ENCODE measurements at regions of chr11 and their contacts with region 1.

Region 1: GRCh38 chr11:66466225-66467027 is at the start of gene PELI3:
- DNase-seq: peak; percentile 78
- H3K4me3 ChIP-seq: peak within 1 kb of the TSS; percentile 71 to 75 (median 73)
- H3K27ac ChIP-seq: no peak within 1 kb of the TSS
- H3K4me1 ChIP-seq: peaks cover 13% of the 10 kb centered on the region
- H3K27me3 ChIP-seq: no peaks in the 10 kb centered on the region
- CTCF ChIP-seq: no peak
- total RNA-seq, gene PELI3: 8.4 to 9.7 TPM

Region 2: GRCh38 chr11:66371627-66372415 is 94.6 kb before region 1 on chr11 and contains the start of gene SLC29A2:
- CTCF ChIA-PET with region 1: no interaction called
- dilution Hi-C with region 1: no loop called
- in situ Hi-C with region 1: no loop called
- intact Hi-C with region 1: no loop called
- DNase-seq: peak; percentile 73
- H3K4me3 ChIP-seq: peak within 1 kb of the TSS; percentile 59 to 75 (median 70)
- H3K27ac ChIP-seq: no peak within 1 kb of the TSS
- H3K4me1 ChIP-seq: peaks cover 10% of the 10 kb centered on the region
- H3K27me3 ChIP-seq: no peaks in the 10 kb centered on the region
- CTCF ChIP-seq: no peak
- total RNA-seq, gene SLC29A2: 3.2 to 5.9 TPM

Region 3: DNA sequence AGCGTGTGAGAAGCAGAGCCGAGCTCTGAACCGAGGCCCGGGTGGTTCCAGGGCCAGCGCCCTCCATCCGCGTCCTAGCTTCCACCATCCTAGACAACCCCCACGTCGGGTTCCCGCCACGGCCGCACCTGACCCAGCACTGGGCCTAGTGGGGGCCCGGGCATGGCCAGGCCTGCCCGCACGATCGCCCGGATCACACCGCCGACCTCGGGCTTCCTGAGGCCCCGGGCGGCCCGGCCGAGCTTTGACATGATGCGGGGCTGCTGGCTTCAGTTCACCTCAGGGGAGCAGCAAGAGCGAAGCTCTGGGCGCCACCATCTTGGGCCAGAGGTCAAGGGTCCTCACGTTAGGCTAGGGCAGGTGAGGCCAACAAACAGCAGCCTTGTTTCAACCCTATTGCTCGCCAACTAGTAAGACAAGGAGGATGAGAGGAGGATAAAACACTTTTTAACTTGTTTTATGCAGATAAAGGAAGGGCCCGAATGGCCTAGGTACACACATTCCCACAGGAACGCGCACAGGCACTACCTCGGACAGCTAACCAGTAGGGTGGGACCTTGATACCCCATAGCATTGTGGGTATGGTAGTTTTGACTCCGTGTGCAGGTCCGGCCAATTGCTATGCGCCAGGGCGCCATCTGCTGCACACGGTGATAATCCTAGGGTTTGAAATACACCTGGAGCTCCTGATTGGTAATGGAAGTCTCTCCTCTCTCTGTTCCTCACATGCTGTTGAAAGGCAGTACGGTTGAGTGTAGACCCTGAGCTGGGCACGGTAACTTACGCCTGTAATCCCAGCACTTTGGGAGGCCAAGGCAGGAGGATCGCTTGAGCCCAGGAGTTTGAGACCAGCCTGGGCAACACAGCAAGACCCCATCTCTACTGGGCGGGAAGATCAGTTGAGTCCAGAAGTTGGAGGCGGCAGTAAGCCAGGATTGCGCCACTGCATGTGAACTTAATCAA is 27.6 kb before region 1 on chr11 and contains the start of gene MRPL11:
- CTCF ChIA-PET with region 1: interaction called, 10 read pairs
- dilution Hi-C with region 1: no loop called
- in situ Hi-C with region 1: no loop called
- intact Hi-C with region 1: loop called (anchors 2 kb)
- DNase-seq: peak; percentile 90
- H3K4me3 ChIP-seq: peak within 1 kb of the TSS; percentile 53 to 87 (median 80)
- H3K27ac ChIP-seq: peak within 1 kb of the TSS; percentile 64
- H3K4me1 ChIP-seq: peaks cover 7% of the 10 kb centered on the region
- H3K27me3 ChIP-seq: no peaks in the 10 kb centered on the region
- CTCF ChIP-seq: peak; percentile 60 to 74
- total RNA-seq, gene MRPL11: 19.8 to 47.6 TPM

Region 4: GRCh38 chr11:66510271-66510989 is 44.0 kb after region 1 on chr11 and contains the start of gene BBS1:
- CTCF ChIA-PET with region 1: no interaction called
- dilution Hi-C with region 1: no loop called
- in situ Hi-C with region 1: no loop called
- intact Hi-C with region 1: no loop called
- DNase-seq: peak; percentile 69
- H3K4me3 ChIP-seq: peak within 1 kb of the TSS; percentile 67 to 84 (median 71)
- H3K27ac ChIP-seq: peak within 1 kb of the TSS; percentile 34
- H3K4me1 ChIP-seq: peaks cover 4% of the 10 kb centered on the region
- H3K27me3 ChIP-seq: no peaks in the 10 kb centered on the region
- CTCF ChIP-seq: no peak
- total RNA-seq, gene BBS1: 20.3 to 44.2 TPM

Region 5: DNA sequence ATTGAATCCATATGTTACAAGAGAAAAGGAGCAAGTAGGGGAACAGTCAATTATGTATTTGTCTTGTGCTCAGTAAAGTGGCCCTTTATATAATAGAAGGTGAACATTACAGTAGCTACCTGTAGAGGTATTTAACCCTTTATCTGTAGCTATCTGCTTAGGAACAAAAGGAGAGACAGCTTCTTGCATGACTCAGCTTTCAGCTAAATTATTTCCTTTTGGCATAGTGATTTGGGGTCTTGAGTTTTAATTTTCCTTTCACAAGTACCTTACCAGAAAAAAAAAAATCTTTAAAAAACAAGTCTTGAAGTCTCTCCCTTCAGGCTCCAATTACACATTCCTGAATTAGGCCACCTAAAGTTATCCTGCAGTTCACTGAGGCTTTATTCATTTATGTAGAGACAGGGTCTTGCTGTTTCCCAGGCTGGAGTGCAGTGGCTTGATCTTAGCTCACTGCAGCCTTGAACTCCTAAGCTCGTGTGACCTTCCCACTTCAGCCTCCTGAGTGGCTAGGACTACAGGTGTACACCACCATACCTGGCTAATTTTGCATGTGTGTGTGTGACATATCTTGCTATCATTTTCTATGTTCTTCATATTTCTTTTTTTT is 344.3 kb after region 1 on chr11:
- CTCF ChIA-PET with region 1: no interaction called
- dilution Hi-C with region 1: no loop called
- in situ Hi-C with region 1: no loop called
- intact Hi-C with region 1: no loop called
- DNase-seq: no peak
- H3K4me3 ChIP-seq: no peak overlapping the region
- H3K27ac ChIP-seq: no peak overlapping the region
- H3K4me1 ChIP-seq: peaks cover 12% of the 10 kb centered on the region
- H3K27me3 ChIP-seq: no peaks in the 10 kb centered on the region
- CTCF ChIP-seq: no peak

Region 6: GRCh38 chr11:67288452-67289225 is 822.2 kb after region 1 on chr11:
- CTCF ChIA-PET with region 1: interaction called, 11 read pairs
- dilution Hi-C with region 1: no loop called
- in situ Hi-C with region 1: no loop called
- intact Hi-C with region 1: no loop called
- DNase-seq: peak; percentile 85
- H3K4me3 ChIP-seq: peak overlapping the region; percentile 45 to 65 (median 64)
- H3K27ac ChIP-seq: peak overlapping the region; percentile 57
- H3K4me1 ChIP-seq: peaks cover 34% of the 10 kb centered on the region
- H3K27me3 ChIP-seq: no peaks in the 10 kb centered on the region
- CTCF ChIP-seq: no peak